A673 (cell line): ENCODE measurements at regions of chr5 and their contacts with region 1.

Region 1: DNA sequence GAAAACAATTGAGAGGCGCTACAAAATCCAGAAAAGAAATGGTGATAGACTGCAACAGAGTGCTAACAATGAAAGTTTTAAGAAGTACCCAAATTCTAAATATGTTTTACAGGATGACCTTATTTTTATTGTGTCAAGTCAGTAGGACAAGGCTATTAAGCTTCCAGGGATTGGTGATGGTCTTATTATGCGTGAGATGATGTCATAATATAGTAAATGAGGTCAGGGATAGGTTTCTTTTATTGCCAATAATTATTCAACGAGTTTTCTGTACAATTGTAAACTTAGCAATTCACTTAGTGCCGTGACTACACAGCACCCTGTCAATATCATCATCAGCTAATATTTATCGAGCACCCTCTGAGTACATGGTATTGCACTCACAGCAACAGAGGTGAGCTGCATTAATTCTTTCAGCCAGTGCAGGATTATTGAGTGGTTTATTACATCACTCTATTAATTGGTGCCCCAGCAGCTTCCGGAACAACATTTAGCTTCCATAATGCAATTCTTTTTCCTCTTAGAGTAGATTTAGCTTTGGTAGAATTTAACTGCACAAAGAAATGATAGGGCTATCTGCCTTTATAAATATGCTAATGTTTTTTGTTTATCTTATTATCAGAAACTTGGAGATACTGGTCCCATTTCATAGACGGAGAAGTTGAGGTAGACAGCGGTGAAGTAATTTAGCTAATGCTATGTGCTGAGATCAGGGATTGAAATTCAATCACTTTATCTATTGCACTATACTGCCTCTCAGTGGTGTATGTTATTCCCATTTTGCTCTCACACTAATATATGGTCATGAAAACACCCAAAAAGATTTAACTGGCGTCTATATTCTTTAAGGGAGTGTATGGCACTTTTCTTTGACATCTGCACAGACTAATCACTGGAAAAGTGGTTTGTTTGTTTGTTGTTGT is 726.2 kb upstream of the WWC1 start:
- DNase-seq: peak; percentile 59
- H3K4me3 ChIP-seq: no peak overlapping the region
- H3K27ac ChIP-seq: no peak overlapping the region
- H3K4me1 ChIP-seq: peaks cover 13% of the 10 kb centered on the region
- H3K27me3 ChIP-seq: no peaks in the 10 kb centered on the region
- CTCF ChIP-seq: peak; percentile 57

Region 2: DNA sequence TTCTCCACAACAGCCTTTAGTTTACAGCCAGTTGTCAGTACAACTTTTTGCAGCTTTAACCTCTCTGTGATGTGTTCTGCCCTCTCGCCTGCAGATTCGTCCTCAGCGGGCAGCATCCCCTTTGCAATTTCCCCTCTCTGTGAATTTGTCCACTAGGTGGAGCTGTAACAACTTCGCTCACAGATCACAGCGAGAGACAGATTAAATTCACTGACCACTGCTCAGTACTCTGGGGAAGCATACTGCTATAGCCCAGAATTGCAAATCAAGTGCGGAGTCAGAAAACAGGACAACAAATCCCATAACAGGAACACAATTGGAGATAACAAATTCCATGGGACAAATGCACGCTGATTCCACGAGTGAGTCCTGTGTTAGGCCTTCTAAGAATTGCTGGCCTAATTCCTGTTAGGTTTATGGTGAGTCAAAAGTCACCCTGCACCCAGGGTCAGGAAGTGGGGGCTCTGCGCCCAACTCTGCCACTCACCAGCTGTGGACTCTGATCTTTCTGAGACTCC is 1935.0 kb before region 1 on chr5:
- CTCF ChIA-PET with region 1: no interaction called
- POLR2A ChIA-PET with region 1: no interaction called
- intact Hi-C with region 1: loop called (anchors 10 kb)
- DNase-seq: peak; percentile 59
- H3K4me3 ChIP-seq: no peak overlapping the region
- H3K27ac ChIP-seq: no peak overlapping the region
- H3K4me1 ChIP-seq: no peaks in the 10 kb centered on the region
- H3K27me3 ChIP-seq: no peaks in the 10 kb centered on the region
- CTCF ChIP-seq: peak; percentile 75

Region 3: DNA sequence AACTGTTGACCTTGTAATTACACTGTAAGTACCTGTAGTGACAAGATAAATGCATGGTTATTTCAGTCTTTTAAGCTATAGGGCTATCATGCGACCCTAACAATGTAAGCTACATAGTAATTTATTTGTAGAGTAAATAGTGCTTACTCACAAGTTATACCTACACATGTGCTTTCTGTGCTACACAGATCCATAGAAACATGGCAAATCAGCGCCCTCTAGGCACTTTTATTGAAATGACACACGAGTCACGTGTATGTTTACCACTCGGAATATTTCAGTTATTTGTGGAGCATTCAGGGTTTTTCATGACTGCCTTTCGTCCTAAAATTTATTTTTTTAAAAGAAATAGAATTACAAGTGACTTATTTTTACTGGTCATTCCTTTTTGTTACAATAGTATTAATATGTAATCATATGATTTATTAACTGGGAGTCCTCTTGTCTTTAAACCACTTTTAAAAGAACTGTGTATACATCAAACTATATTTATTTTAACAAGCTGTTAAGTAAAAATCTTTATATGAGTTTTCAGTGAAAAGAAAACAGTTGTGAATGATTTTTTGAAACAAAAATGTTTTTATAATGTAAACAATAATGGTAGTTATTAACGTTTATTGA is 516.1 kb before region 1 on chr5:
- CTCF ChIA-PET with region 1: no interaction called
- POLR2A ChIA-PET with region 1: no interaction called
- intact Hi-C with region 1: loop called (anchors 10 kb)
- DNase-seq: peak; percentile 71
- H3K4me3 ChIP-seq: no peak overlapping the region
- H3K27ac ChIP-seq: no peak overlapping the region
- H3K4me1 ChIP-seq: no peaks in the 10 kb centered on the region
- H3K27me3 ChIP-seq: no peaks in the 10 kb centered on the region
- CTCF ChIP-seq: peak; percentile 68

Region 4: DNA sequence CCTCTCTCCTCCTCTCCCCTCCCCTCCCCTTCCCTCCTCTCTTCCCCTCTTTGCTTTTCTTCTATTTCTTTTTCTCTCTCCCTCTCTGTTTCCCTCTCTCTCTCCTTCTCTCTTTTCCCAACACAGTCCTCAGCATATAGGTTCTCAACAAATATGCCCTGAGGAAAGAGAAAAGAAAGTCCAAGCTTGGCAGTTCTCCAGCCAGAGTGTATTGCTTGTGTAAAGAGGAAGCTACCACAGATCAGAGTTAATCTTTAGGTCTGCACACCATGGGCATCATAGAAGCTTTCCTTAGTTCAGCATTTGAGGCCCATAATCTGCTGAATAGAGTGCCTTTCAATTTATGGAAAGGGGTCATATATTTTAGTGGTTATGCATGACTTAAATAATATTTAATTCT is 343.3 kb after region 1 on chr5:
- CTCF ChIA-PET with region 1: no interaction called
- POLR2A ChIA-PET with region 1: interaction called, 19 read pairs
- intact Hi-C with region 1: no loop called
- DNase-seq: peak; percentile 78
- H3K4me3 ChIP-seq: no peak overlapping the region
- H3K27ac ChIP-seq: peak overlapping the region; percentile 65
- H3K4me1 ChIP-seq: peaks cover 63% of the 10 kb centered on the region
- H3K27me3 ChIP-seq: no peaks in the 10 kb centered on the region
- CTCF ChIP-seq: no peak